ENCODE measurements at regions of chr16 and their contacts with region 1.

Region 1: DNA sequence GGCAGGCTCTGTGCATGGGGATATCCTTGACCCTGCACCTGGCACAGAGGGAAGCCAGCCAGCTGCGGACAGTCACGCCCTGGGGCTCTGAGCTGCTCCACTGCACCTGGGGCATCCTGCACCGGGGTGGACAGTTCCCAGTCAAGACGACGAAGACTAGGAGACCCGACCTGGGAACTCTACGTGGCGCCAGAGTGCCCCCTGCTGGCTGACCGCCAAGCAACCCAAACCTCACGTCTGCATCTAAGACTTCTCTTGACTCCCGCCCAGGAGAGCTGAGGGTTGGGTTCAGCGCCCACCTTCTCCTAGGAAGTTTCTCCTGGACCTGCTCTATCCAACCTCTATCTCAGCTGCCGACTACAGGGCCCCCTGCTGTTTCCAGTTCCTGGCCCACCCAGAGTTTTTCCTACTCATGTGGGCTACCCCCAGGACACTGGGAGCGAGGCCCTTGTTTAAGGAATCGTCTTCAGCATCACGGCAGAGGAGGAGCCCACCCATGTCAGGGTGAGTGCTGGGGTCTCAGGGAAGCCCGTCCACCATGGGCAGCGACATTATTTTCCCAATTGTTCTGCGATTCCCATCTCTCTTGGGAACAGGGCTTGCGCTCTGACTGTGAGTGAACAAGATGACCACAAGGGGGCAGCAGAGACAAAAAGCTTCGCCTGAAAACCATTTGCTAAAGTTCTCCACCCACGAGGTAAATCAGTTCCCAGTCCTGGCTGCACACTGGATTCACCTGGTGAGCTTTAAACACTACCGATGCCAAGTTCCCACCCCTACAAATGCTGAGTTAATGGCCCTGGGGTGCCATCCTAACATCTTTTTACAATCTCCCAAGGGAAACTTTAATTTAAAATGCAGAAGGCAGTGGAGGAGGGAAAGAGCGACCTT is 29.3 kb downstream of the TLE7 start:
- DNase-seq: peak; percentile 32 to 66 (median 55)
- ATAC-seq: peak; percentile 80
- H3K4me3 ChIP-seq: no peak overlapping the region
- H3K4me3 Mint-ChIP-seq: peak overlapping the region in 1 of 10 donors; percentile 19
- H3K27ac ChIP-seq: no peak overlapping the region
- H3K27ac Mint-ChIP-seq: no peak overlapping the region
- H3K4me1 ChIP-seq: peaks cover 3 to 9% of the 10 kb centered on the region in 2 donors
- H3K4me1 Mint-ChIP-seq: peaks cover 0 to 11% (median 5%) of the 10 kb centered on the region in 7 donors
- H3K27me3 ChIP-seq: peaks cover 0 to 7% of the 10 kb centered on the region in 2 donors
- H3K27me3 Mint-ChIP-seq: peaks cover 27 to 59% (median 39%) of the 10 kb centered on the region in 5 donors

Region 2: GRCh38 chr16:71467810-71468209 is 55.3 kb after region 1 on chr16:
- CTCF ChIA-PET with region 1: no interaction called
- POLR2A ChIA-PET with region 1: no interaction called
- intact Hi-C with region 1: no loop called
- DNase-seq: peak; percentile 5 to 50 (median 34)
- ATAC-seq: peak; percentile 77
- H3K4me3 ChIP-seq: no peak overlapping the region
- H3K4me3 Mint-ChIP-seq: no peak overlapping the region
- H3K27ac ChIP-seq: no peak overlapping the region
- H3K27ac Mint-ChIP-seq: peak overlapping the region in 1 of 9 donors; percentile 44
- H3K4me1 ChIP-seq: no peaks in the 10 kb centered on the region
- H3K4me1 Mint-ChIP-seq: peaks cover 0 to 6% (median 5%) of the 10 kb centered on the region in 7 donors
- H3K27me3 ChIP-seq: no peaks in the 10 kb centered on the region
- H3K27me3 Mint-ChIP-seq: no peaks in the 10 kb centered on the region

Region 3: DNA sequence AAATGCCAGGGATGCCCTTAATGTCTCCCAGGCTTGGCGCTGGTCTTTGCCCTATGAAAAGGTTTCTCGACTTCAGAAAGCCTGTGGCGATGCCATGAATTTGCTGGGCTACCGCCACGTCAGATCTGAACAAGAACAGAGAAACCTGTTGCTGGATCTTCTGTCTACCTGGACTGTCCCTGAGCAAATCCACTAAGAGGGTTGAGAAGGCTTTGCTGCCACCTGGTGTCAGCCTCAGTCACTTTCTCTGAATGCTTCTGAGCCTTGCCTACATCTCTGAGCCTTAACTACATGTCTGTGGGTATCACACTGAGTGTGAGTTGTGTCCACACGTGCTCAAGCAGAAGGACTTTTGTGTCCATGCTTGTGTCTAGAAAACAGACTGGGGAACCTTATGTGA is 125.1 kb after region 1 on chr16:
- CTCF ChIA-PET with region 1: interaction called, 5 read pairs
- POLR2A ChIA-PET with region 1: no interaction called
- intact Hi-C with region 1: loop called (anchors 1 kb)
- DNase-seq: peak in 6 of 9 donors; percentile 5 to 28 (median 10)
- ATAC-seq: peak; percentile 55
- H3K4me3 ChIP-seq: no peak overlapping the region
- H3K4me3 Mint-ChIP-seq: no peak overlapping the region
- H3K27ac ChIP-seq: no peak overlapping the region
- H3K27ac Mint-ChIP-seq: no peak overlapping the region
- H3K4me1 ChIP-seq: no peaks in the 10 kb centered on the region
- H3K4me1 Mint-ChIP-seq: peaks cover 0 to 5% (median 4%) of the 10 kb centered on the region in 7 donors
- H3K27me3 ChIP-seq: no peaks in the 10 kb centered on the region
- H3K27me3 Mint-ChIP-seq: peaks cover 4 to 7% (median 5%) of the 10 kb centered on the region in 5 donors

Measured in naive thymus-derived CD4-positive, alpha-beta T cell (primary cell).